Esophagus muscularis mucosa (tissue), 4 donors: ENCODE measurements at regions of chr6 and their contacts with region 1.

Region 1: GRCh38 chr6:14046476-14047068 is 71.0 kb upstream of the CD83 start:
- DNase-seq: no peak
- H3K4me3 ChIP-seq: no peak overlapping the region
- H3K27ac ChIP-seq: no peak overlapping the region
- H3K4me1 ChIP-seq: no peaks in the 10 kb centered on the region
- H3K27me3 ChIP-seq: peaks cover 0 to 36% (median 0%) of the 10 kb centered on the region in 4 donors
- CTCF ChIP-seq: peak; percentile 44 to 66 (median 53)
- EP300 ChIP-seq: no peak
- POLR2A ChIP-seq: no peak

Region 2: GRCh38 chr6:13795041-13795750 is 251.4 kb before region 1 on chr6:
- intact Hi-C with region 1: loop called (anchors 10 kb)
- DNase-seq: peak; percentile 94
- H3K4me3 ChIP-seq: no peak overlapping the region
- H3K27ac ChIP-seq: no peak overlapping the region
- H3K4me1 ChIP-seq: peaks cover 0 to 5% (median 2%) of the 10 kb centered on the region in 4 donors
- H3K27me3 ChIP-seq: no peaks in the 10 kb centered on the region
- CTCF ChIP-seq: peak; percentile 87 to 91 (median 88)
- EP300 ChIP-seq: no peak
- POLR2A ChIP-seq: no peak

Region 3: DNA sequence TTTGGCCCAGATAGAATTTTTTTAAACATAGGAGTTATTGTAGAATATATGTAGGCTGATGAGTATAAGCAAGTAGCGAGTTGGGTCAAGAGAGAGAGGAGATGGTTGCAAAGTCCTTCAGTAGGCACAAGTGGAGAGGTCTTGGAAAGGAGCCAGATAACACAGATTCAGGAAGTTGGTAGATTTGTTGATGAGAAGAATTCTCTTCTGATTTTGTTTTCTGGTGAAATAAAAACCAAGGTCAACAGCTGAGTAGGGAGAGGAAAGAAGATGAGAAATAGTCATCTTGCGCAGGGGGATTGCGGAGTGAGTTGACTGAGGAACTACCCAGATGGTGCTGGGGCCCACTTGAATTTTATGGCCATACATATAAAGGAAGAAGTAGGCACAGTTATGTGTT is 53.6 kb after region 1 on chr6:
- intact Hi-C with region 1: no loop called
- DNase-seq: no peak
- H3K4me3 ChIP-seq: no peak overlapping the region
- H3K27ac ChIP-seq: no peak overlapping the region
- H3K4me1 ChIP-seq: no peaks in the 10 kb centered on the region
- H3K27me3 ChIP-seq: peaks cover 0 to 8% (median 0%) of the 10 kb centered on the region in 4 donors
- CTCF ChIP-seq: no peak
- EP300 ChIP-seq: no peak
- POLR2A ChIP-seq: no peak

Region 4: GRCh38 chr6:14210663-14211561 is 164.3 kb after region 1 on chr6:
- intact Hi-C with region 1: no loop called
- DNase-seq: peak; percentile 97
- H3K4me3 ChIP-seq: peak overlapping the region; percentile 66 to 72 (median 70)
- H3K27ac ChIP-seq: peak overlapping the region; percentile 73 to 87 (median 80)
- H3K4me1 ChIP-seq: peaks cover 8 to 20% (median 14%) of the 10 kb centered on the region in 4 donors
- H3K27me3 ChIP-seq: no peaks in the 10 kb centered on the region
- CTCF ChIP-seq: peak; percentile 75 to 96 (median 75)
- EP300 ChIP-seq: no peak
- POLR2A ChIP-seq: peak; percentile 25